Right cardiac atrium (tissue), 5 donors: ENCODE measurements at regions of chr16 and their contacts with region 1.

Region 1: DNA sequence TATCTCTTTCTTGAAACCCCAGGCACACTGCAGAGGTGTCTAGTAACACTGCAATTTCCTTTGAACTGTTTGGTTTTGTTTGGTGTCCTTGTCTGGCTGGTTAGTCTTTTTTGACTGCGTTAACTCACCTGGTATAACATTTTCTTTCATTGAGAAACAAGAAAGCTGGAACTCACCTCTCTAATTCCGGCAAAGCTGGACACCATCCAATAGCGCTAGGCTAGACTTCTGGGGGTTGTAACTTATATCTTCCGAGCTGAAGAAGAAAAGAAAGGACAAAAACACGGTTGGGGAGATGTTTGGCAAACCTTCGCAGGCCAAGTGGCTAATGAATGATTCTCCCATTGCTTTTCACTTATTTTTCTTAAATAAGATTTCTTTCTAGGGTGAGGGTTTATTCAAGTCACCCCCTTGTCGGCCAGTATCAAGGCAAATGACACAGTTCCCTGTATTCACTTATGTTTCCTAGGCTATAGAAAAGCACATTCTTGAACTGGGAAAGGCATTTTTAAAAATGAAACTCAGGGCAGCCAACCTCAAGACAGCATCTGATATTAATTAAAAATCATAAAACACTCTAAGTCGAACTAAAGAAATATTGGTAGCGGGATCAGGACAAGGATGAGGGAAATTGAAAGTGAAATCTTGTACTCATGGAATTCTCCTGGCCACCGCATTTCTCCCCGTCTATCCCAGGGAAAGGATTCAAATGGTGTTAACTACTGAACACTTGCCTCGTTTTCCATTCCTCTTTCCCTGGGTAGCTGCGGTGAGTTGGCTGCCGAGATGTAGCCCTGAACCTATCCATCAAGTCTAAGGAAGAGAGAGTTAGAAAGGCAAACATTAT is 95.9 kb upstream of the ZFHX3 start:
- DNase-seq: no peak
- ATAC-seq: peak; percentile 50 to 57
- H3K4me3 ChIP-seq: peak overlapping the region; percentile 79
- H3K27ac ChIP-seq: peak overlapping the region; percentile 59
- H3K4me1 ChIP-seq: peaks cover 2% of the 10 kb centered on the region
- H3K27me3 ChIP-seq: no peaks in the 10 kb centered on the region

Region 2: GRCh38 chr16:73058616-73059409 is 85.0 kb before region 1 on chr16:
- intact Hi-C with region 1: no loop called
- DNase-seq: peak; percentile 58 to 81 (median 79)
- ATAC-seq: peak; percentile 21 to 33
- H3K4me3 ChIP-seq: peak overlapping the region; percentile 100
- H3K27ac ChIP-seq: peak overlapping the region; percentile 100
- H3K4me1 ChIP-seq: no peaks in the 10 kb centered on the region
- H3K27me3 ChIP-seq: no peaks in the 10 kb centered on the region

Region 3: DNA sequence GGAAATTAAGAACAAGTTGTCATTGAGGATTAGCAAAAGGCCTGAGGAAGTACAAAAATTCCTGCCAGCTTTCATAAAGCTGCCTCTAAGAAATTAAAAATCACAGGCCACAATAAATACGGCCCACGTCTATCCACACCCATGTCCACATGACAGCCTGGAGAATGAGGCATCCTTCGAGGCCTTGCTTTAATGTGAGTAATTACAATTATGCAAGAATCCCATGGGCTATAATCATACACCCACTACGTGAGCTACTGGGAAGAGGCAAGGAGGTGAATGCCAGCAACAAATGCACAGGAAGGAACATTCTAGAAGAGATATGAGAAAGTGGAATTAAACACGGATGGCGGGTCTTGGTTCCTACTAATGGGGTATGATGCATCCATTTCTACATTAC is 30.5 kb before region 1 on chr16:
- intact Hi-C with region 1: loop called in 1 of 4 experiments (anchors 2 kb)
- DNase-seq: no peak
- ATAC-seq: peak; percentile 16 to 63
- H3K4me3 ChIP-seq: no peak overlapping the region
- H3K27ac ChIP-seq: no peak overlapping the region
- H3K4me1 ChIP-seq: no peaks in the 10 kb centered on the region
- H3K27me3 ChIP-seq: no peaks in the 10 kb centered on the region